ENCODE measurements at regions of chr1 and their contacts with region 1.

Region 1: DNA sequence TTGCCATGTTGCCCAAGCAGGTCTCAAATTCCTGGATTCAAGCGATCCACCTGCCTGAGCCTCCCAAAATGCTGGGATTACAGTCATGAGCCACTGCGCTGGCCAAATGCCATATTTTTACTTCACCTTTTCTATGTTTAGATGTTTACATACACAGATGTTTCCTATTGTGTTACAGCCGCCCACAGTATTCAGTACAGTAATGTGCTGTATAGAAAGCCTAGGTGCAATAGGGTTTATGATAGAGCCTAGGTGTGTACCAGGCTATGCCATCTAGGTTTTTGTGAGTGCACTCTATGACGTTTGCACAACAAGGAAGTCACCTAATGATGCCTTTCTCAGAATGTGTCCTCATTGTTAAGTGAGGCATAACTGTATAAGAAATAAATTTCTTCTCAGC is 153.4 kb downstream of the CHRM3 start:
- DNase-seq: no peak
- H3K4me3 ChIP-seq: no peak overlapping the region
- CTCF ChIP-seq: no peak
- POLR2A ChIP-seq: no peak

Region 2: GRCh38 chr1:239560921-239561320 is 21.1 kb after region 1 on chr1:
- intact Hi-C with region 1: loop called (anchors 2 kb)
- DNase-seq: no peak
- H3K4me3 ChIP-seq: no peak overlapping the region
- CTCF ChIP-seq: no peak
- POLR2A ChIP-seq: no peak

Measured in lower leg skin (tissue), 4 donors.